ENCODE measurements at regions of chr18 and their contacts with region 1.

Region 1: DNA sequence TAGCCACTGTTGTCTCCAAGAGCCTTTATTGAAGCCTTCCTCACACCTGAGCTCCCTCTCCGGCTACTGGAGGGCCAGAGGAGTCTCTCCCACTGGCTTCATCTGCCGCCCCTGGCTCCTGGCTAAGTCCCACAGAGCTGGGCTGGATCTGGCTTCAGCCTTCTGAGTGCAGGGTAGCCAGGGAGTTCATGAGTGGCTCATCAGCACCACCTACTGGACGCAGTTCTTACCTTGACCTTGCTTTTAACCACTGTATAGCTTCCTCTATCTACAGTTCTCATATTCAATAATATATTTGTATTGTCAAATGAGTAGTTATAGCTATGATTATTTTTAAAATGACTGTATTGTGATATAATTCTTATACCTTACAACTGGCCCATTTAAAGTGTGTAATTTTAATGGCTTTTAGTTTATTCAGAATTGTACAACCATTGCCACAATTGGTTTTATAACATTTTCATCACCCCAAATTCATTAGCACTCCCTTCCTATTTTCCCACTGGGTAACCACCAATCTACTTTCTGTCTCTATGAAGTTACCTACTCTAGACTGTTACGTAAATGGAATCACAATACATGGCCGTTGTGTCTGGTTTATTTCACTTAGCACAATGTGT is 17.7 kb downstream of the CNDP1 start:
- DNase-seq: peak; percentile 62 to 73 (median 67)
- H3K4me3 ChIP-seq: no peak overlapping the region
- H3K4me3 Mint-ChIP-seq: no peak overlapping the region
- H3K27ac ChIP-seq: no peak overlapping the region
- H3K27ac Mint-ChIP-seq: no peak overlapping the region
- H3K4me1 ChIP-seq: no peaks in the 10 kb centered on the region
- H3K4me1 Mint-ChIP-seq: no peaks in the 10 kb centered on the region
- H3K27me3 ChIP-seq: no peaks in the 10 kb centered on the region
- H3K27me3 Mint-ChIP-seq: peaks cover 8 to 16% of the 10 kb centered on the region in 2 donors

Region 2: GRCh38 chr18:74040459-74041332 is 511.4 kb before region 1 on chr18:
- CTCF ChIA-PET with region 1: interaction called, 3 read pairs
- POLR2A ChIA-PET with region 1: no interaction called
- intact Hi-C with region 1: loop called (anchors 1 kb)
- DNase-seq: peak in 4 of 5 donors; percentile 30 to 43 (median 36)
- H3K4me3 ChIP-seq: no peak overlapping the region
- H3K4me3 Mint-ChIP-seq: no peak overlapping the region
- H3K27ac ChIP-seq: no peak overlapping the region
- H3K27ac Mint-ChIP-seq: no peak overlapping the region
- H3K4me1 ChIP-seq: no peaks in the 10 kb centered on the region
- H3K4me1 Mint-ChIP-seq: no peaks in the 10 kb centered on the region
- H3K27me3 ChIP-seq: no peaks in the 10 kb centered on the region
- H3K27me3 Mint-ChIP-seq: peaks cover 2 to 8% of the 10 kb centered on the region in 2 donors

Region 3: GRCh38 chr18:74310411-74310810 is 241.6 kb before region 1 on chr18:
- CTCF ChIA-PET with region 1: interaction called, 16 read pairs
- POLR2A ChIA-PET with region 1: no interaction called
- intact Hi-C with region 1: loop called (anchors 1 kb)
- DNase-seq: peak in 3 of 5 donors; percentile 6 to 18 (median 12)
- H3K4me3 ChIP-seq: no peak overlapping the region
- H3K4me3 Mint-ChIP-seq: no peak overlapping the region
- H3K27ac ChIP-seq: no peak overlapping the region
- H3K27ac Mint-ChIP-seq: no peak overlapping the region
- H3K4me1 ChIP-seq: no peaks in the 10 kb centered on the region
- H3K4me1 Mint-ChIP-seq: peaks cover 0 to 3% (median under 1%) of the 10 kb centered on the region in 4 donors
- H3K27me3 ChIP-seq: no peaks in the 10 kb centered on the region
- H3K27me3 Mint-ChIP-seq: peaks cover 21 to 30% of the 10 kb centered on the region in 2 donors

Region 4: DNA sequence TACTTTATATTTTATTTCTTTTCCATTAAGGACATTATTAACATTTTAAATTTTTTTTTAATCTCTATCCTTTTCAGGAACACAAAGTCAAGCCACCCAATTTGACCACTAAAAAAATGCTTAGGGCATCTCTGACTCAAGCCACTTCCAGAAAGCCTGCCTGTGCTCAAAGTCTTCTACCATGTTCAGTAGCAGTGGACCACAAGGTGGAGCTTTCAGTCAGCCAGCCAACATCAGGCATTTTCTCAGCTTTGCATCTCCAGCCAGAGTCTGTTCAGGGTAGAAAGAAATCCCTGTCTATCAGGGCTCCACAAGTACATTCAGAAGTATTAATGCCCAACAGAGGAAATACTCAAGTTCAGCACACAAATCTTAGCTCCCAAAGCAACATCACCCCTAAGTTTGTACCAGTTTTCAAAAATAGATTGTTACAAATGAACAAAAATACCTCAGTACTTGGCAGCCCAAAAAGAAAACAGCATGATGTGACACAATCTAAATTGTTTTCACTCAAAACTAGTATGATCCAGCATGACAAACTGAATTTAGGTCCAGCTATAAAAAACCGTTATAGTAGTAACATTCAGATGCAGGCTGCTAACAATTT is 198.8 kb before region 1 on chr18:
- CTCF ChIA-PET with region 1: interaction called, 52 read pairs
- POLR2A ChIA-PET with region 1: interaction called, 4 read pairs
- intact Hi-C with region 1: loop called (anchors 1 kb)
- DNase-seq: peak; percentile 66 to 69 (median 67)
- H3K4me3 ChIP-seq: no peak overlapping the region
- H3K4me3 Mint-ChIP-seq: no peak overlapping the region
- H3K27ac ChIP-seq: no peak overlapping the region
- H3K27ac Mint-ChIP-seq: peak overlapping the region in 2 of 7 donors; percentile 11 to 58
- H3K4me1 ChIP-seq: peaks cover 9% of the 10 kb centered on the region
- H3K4me1 Mint-ChIP-seq: peaks cover 0 to 7% (median 5%) of the 10 kb centered on the region in 4 donors
- H3K27me3 ChIP-seq: no peaks in the 10 kb centered on the region
- H3K27me3 Mint-ChIP-seq: peaks cover 0 to 9% of the 10 kb centered on the region in 2 donors

Region 5: DNA sequence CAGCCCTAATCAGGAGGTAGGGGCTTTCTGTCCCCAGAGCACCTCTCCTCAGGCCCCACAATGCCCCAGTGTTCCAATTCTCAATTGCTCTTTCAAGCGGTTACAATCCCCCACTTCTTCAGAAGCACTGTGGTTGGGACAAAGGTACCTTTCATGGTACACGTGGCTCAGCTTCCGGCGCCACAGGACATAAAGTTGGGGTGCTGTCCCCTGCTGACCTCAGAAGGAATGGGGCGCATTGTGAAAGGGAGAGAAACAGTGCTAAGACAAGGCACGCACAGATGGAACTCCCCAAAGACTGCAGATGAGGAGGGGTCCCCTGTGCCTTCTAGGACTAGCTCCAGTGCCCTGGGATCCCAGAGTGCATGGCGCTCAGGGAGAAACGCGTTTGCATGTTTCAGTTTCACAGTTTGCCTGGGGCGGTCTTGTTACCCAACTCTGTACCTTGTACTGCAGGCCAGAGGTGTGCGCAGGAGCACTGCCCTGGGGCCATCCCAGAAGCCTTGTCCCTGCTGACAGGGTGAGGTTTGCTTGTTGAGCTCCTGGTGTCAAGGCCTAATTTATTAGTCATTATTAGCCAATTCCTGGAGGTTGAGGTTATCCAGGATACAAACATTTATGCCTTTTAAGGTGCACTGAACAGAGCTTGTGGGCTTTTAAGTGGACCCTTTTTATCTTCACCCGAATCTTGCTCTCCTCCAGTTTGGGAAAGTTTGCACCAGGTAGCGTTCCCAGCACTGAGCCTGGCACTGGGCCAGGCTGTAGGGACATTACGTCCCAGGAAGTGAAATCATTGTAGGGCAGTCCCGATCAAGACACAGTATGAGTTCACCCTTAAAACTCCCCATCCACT is 10.1 kb before region 1 on chr18:
- CTCF ChIA-PET with region 1: interaction called, 14 read pairs
- POLR2A ChIA-PET with region 1: no interaction called
- intact Hi-C with region 1: no loop called
- DNase-seq: no peak
- H3K4me3 ChIP-seq: no peak overlapping the region
- H3K4me3 Mint-ChIP-seq: peak overlapping the region in 1 of 8 donors; percentile 31
- H3K27ac ChIP-seq: no peak overlapping the region
- H3K27ac Mint-ChIP-seq: peak overlapping the region in 1 of 7 donors; percentile 18
- H3K4me1 ChIP-seq: peaks cover 1% of the 10 kb centered on the region
- H3K4me1 Mint-ChIP-seq: peaks cover 2 to 5% (median 4%) of the 10 kb centered on the region in 4 donors
- H3K27me3 ChIP-seq: no peaks in the 10 kb centered on the region
- H3K27me3 Mint-ChIP-seq: peaks cover 0 to 5% of the 10 kb centered on the region in 2 donors

Region 6: GRCh38 chr18:74806700-74807416 is 254.8 kb after region 1 on chr18:
- CTCF ChIA-PET with region 1: no interaction called
- POLR2A ChIA-PET with region 1: no interaction called
- intact Hi-C with region 1: no loop called
- DNase-seq: no peak
- H3K4me3 ChIP-seq: no peak overlapping the region
- H3K4me3 Mint-ChIP-seq: no peak overlapping the region
- H3K27ac ChIP-seq: no peak overlapping the region
- H3K27ac Mint-ChIP-seq: peak overlapping the region in 1 of 7 donors; percentile 6
- H3K4me1 ChIP-seq: no peaks in the 10 kb centered on the region
- H3K4me1 Mint-ChIP-seq: no peaks in the 10 kb centered on the region
- H3K27me3 ChIP-seq: no peaks in the 10 kb centered on the region
- H3K27me3 Mint-ChIP-seq: no peaks in the 10 kb centered on the region